ENCODE measurements at regions of chr7 and their contacts with region 1.

Region 1: GRCh38 chr7:2403014-2403717 is at the start of gene CHST12:
- DNase-seq: peak; percentile 89 to 92
- ATAC-seq: peak; percentile 89 to 92
- H3K4me3 ChIP-seq: peak within 1 kb of the TSS; percentile 84 to 97 (median 86)
- H3K27ac ChIP-seq: peak within 1 kb of the TSS; percentile 75 to 85 (median 82)
- H3K4me1 ChIP-seq: peaks cover 18 to 21% of the 10 kb centered on the region in 2 donors
- H3K27me3 ChIP-seq: no peaks in the 10 kb centered on the region
- CTCF ChIP-seq: no peak
- POLR2A ChIP-seq: peak; percentile 50 to 67
- total RNA-seq, gene CHST12: 5.5 to 13.1 (median 10.1) TPM

Region 2: GRCh38 chr7:2232766-2233520 is 170.2 kb before region 1 on chr7 and contains the start of gene MAD1L1:
- in situ Hi-C with region 1: no loop called
- intact Hi-C with region 1: loop called (anchors 5 kb)
- DNase-seq: peak; percentile 69 to 78
- ATAC-seq: peak; percentile 95
- H3K4me3 ChIP-seq: peak within 1 kb of the TSS; percentile 82 to 99 (median 92)
- H3K27ac ChIP-seq: peak within 1 kb of the TSS; percentile 73 to 86 (median 80)
- H3K4me1 ChIP-seq: peaks cover 16 to 22% of the 10 kb centered on the region in 2 donors
- H3K27me3 ChIP-seq: no peaks in the 10 kb centered on the region
- CTCF ChIP-seq: no peak
- POLR2A ChIP-seq: peak in 1 of 2 donors; percentile 12
- total RNA-seq, gene MAD1L1: 19.7 to 32.4 (median 22.7) TPM

Region 3: GRCh38 chr7:2314209-2314955 is 88.8 kb before region 1 on chr7 and contains the start of gene SNX8:
- in situ Hi-C with region 1: no loop called
- intact Hi-C with region 1: loop called (anchors 1 kb)
- DNase-seq: peak; percentile 80
- ATAC-seq: peak; percentile 93 to 96
- H3K4me3 ChIP-seq: peak within 1 kb of the TSS; percentile 75 to 90 (median 78)
- H3K27ac ChIP-seq: peak within 1 kb of the TSS; percentile 63 to 80 (median 74)
- H3K4me1 ChIP-seq: no peaks in the 10 kb centered on the region
- H3K27me3 ChIP-seq: no peaks in the 10 kb centered on the region
- CTCF ChIP-seq: peak in 1 of 5 experiments; percentile 6
- POLR2A ChIP-seq: peak; percentile 44 to 64
- total RNA-seq, gene SNX8: 6.4 to 28.1 (median 24.8) TPM

Region 4: GRCh38 chr7:2431260-2431867 is 28.2 kb after region 1 on chr7:
- in situ Hi-C with region 1: no loop called
- intact Hi-C with region 1: no loop called
- DNase-seq: no peak
- ATAC-seq: no peak
- H3K4me3 ChIP-seq: no peak overlapping the region
- H3K27ac ChIP-seq: no peak overlapping the region
- H3K4me1 ChIP-seq: no peaks in the 10 kb centered on the region
- H3K27me3 ChIP-seq: no peaks in the 10 kb centered on the region
- CTCF ChIP-seq: peak in 1 of 5 experiments; percentile 8
- POLR2A ChIP-seq: no peak

Region 5: DNA sequence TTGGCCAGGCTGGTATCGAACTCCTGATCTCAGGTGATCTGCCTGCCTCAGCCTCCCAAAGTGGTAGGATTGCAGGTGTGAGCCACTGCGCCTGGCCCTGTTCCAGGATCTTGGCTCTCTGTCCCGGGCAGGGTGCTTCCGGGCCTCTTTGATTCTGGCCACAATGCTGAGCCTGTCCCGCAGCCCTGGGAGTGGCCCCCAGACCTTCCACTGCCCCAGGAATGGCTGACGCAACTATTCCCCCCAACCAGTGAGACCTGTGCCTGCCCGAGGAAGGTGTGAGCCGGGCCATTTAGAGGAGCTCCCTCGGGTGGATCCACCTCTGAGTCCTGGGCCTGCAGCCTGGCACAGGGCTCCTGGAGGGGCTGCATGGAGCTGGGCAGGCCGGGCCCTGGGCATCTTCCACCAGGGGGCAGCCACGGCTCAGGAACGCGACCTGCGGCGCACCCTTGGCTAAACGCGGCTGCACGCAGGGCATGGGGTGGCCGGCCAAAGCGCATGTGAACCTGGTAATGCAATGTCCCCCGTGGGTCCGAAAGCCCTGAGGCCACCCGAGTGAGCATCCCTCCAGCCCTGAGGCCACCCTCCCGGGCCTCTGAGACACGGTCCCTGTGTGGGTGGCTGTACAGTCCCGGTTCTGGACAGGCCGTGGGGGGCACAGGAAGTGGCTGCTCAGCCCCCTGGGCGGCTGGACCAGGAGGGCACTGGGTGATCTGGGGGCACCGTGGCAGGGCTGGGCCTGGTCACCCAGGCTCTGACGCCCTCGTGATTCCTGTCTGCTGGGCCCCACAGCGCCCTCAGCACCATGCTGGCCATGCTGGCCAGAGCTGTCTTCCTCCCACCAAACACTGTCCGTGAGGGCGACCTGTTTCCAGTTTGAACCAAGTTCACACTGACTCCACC is 48.3 kb after region 1 on chr7:
- in situ Hi-C with region 1: no loop called
- intact Hi-C with region 1: no loop called
- DNase-seq: peak; percentile 32 to 61
- ATAC-seq: peak; percentile 78 to 91
- H3K4me3 ChIP-seq: peak overlapping the region; percentile 39 to 65 (median 55)
- H3K27ac ChIP-seq: no peak overlapping the region
- H3K4me1 ChIP-seq: peaks cover 0 to 9% of the 10 kb centered on the region in 2 donors
- H3K27me3 ChIP-seq: no peaks in the 10 kb centered on the region
- CTCF ChIP-seq: peak; percentile 66 to 92 (median 84)
- POLR2A ChIP-seq: no peak

Region 6: DNA sequence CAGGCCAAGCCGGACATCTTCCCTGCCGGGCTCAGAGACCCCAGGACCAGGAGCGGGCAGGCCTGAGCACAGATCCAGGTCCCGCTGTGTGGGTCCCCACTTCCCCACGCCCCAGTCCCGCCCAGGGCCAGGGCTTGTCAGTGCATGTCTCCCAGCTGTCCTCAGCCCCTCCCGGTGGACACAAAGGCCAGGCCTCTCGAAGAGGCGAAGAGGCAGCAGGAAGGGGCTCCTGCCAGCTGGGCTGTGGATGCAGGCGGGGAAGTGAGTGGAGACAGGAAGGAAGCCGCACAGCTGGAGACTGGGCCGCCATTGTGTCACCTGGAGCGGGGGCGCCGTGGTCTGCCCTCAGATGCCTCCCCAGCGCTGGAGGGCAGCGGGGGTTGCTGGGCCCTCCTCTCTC is 68.2 kb after region 1 on chr7:
- in situ Hi-C with region 1: no loop called
- intact Hi-C with region 1: loop called (anchors 2 kb)
- DNase-seq: no peak
- ATAC-seq: no peak
- H3K4me3 ChIP-seq: no peak overlapping the region
- H3K27ac ChIP-seq: no peak overlapping the region
- H3K4me1 ChIP-seq: no peaks in the 10 kb centered on the region
- H3K27me3 ChIP-seq: peaks cover 8 to 17% (median 14%) of the 10 kb centered on the region in 3 donors
- CTCF ChIP-seq: no peak
- POLR2A ChIP-seq: no peak

Region 7: DNA sequence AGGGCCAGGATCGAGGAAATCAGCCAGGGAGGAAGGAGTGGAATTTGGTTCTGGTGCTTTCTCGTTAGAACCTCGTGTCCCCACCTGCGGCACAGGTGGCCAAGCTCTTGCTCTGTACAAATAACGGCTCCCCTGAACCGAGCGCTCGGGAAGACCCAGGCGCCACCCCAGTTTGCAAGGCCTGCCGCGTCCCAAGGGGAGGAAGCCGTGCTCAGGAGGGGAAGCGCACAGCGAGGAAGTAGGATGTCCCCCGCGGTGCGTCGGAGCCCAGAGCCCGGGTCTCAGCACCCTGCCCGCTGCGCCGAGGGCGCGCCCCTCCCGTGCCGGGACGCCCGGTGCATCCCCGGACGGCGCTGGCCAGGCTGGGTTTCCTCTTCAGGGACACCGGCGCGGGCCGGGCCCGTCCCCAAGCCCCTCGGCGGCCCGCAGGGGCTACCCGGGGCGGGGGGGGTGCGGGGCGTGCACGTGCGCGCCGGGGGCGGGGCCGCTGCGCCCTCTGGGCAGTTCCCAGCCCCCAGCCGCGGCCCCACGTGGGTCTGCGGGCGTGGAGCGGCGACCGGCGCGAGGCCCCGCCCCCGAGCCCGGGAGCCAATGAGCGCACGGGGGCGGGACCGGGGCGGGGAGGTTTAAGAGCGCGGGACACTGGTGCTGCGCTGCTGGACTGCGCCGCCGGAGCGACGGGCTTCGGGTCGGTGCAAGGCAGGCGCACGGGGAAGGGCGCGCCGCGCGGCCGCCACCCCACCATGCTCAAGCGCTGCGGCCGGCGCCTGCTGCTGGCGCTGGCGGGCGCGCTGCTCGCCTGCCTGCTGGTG is 116.2 kb after region 1 on chr7 and contains the start of gene LFNG:
- in situ Hi-C with region 1: no loop called
- intact Hi-C with region 1: loop called (anchors 2 kb)
- DNase-seq: peak; percentile 74 to 77
- ATAC-seq: peak; percentile 85 to 92
- H3K4me3 ChIP-seq: peak within 1 kb of the TSS; percentile 53 to 69 (median 55)
- H3K27ac ChIP-seq: peak within 1 kb of the TSS in 1 of 4 donors; percentile 18
- H3K4me1 ChIP-seq: peaks cover 0 to 25% of the 10 kb centered on the region in 2 donors
- H3K27me3 ChIP-seq: peaks cover 25 to 33% (median 30%) of the 10 kb centered on the region in 3 donors
- CTCF ChIP-seq: no peak
- POLR2A ChIP-seq: peak; percentile 76 to 94
- total RNA-seq, gene LFNG: 1.0 to 5.9 (median 1.7) TPM

Region 8: GRCh38 chr7:2785071-2785500 is 381.9 kb after region 1 on chr7:
- in situ Hi-C with region 1: no loop called
- intact Hi-C with region 1: no loop called
- DNase-seq: no peak
- ATAC-seq: peak; percentile 19 to 36
- H3K4me3 ChIP-seq: no peak overlapping the region
- H3K27ac ChIP-seq: peak overlapping the region in 1 of 4 donors; percentile 36
- H3K4me1 ChIP-seq: peaks cover 23% of the 10 kb centered on the region in 2 donors
- H3K27me3 ChIP-seq: no peaks in the 10 kb centered on the region
- CTCF ChIP-seq: no peak
- POLR2A ChIP-seq: no peak